ENCODE measurements at regions of chr6 and their contacts with region 1.

Region 1: GRCh38 chr6:3748208-3749066 is 3.1 kb downstream of the PXDC1 start:
- DNase-seq: peak; percentile 97
- H3K4me3 ChIP-seq: peak overlapping the region; percentile 86
- H3K27ac ChIP-seq: peak overlapping the region; percentile 94
- H3K4me1 ChIP-seq: peaks cover 47% of the 10 kb centered on the region
- H3K27me3 ChIP-seq: no peaks in the 10 kb centered on the region

Region 2: DNA sequence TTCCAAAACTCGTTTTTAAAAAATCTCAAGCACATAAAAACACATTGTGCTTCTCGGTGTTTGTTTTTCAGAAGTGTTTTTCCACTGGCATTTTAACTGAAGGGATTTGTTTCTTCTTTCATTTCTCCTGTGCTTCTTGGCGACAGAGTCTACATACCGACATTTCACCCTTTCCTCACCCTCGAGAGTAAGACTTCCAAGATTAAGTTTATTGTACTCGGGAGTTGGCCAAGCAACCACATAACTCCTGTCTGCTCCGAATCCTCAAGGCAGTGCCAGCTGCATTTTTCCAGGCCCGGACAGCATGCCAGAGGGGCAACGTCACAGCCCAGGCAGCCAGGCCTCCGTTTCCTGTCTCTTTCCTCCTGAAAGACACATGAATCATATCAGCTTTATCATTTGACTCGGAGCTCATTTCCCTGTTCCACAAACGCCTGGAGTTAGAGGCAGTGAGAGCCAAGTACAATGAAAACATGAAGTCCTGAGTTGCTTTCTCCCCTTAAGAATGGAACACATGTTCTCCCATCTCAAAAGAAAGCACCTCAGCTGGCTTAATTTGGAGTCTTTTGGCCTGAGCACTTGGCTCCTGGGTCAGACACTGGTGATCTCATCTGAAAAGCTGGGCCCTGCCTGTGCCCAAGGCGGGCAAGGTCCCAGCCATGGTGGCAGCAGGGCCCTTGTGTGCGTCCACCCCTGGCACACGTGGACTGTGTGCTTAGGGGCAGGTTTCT is 77.6 kb after region 1 on chr6:
- in situ Hi-C with region 1: loop called (anchors 5 kb)
- DNase-seq: peak; percentile 98
- H3K4me3 ChIP-seq: peak overlapping the region; percentile 66
- H3K27ac ChIP-seq: peak overlapping the region; percentile 90
- H3K4me1 ChIP-seq: peaks cover 25% of the 10 kb centered on the region
- H3K27me3 ChIP-seq: no peaks in the 10 kb centered on the region

Measured in GM23248 (cell line).